A549 (cell line): ENCODE measurements at regions of chr5 and their contacts with region 1.

Region 1: GRCh38 chr5:126624534-126624933 is 23.8 kb downstream of the PHAX start:
- DNase-seq: peak; percentile 69 to 80
- ATAC-seq: peak; percentile 83 to 95
- H3K4me3 ChIP-seq: no peak overlapping the region
- H3K27ac ChIP-seq: peak overlapping the region; percentile 62 to 75
- H3K4me1 ChIP-seq: peaks cover 24% of the 10 kb centered on the region
- CTCF ChIP-seq: no peak
- EP300 ChIP-seq: no peak
- POLR2A ChIP-seq: no peak
- RAD21 ChIP-seq: no peak

Region 2: DNA sequence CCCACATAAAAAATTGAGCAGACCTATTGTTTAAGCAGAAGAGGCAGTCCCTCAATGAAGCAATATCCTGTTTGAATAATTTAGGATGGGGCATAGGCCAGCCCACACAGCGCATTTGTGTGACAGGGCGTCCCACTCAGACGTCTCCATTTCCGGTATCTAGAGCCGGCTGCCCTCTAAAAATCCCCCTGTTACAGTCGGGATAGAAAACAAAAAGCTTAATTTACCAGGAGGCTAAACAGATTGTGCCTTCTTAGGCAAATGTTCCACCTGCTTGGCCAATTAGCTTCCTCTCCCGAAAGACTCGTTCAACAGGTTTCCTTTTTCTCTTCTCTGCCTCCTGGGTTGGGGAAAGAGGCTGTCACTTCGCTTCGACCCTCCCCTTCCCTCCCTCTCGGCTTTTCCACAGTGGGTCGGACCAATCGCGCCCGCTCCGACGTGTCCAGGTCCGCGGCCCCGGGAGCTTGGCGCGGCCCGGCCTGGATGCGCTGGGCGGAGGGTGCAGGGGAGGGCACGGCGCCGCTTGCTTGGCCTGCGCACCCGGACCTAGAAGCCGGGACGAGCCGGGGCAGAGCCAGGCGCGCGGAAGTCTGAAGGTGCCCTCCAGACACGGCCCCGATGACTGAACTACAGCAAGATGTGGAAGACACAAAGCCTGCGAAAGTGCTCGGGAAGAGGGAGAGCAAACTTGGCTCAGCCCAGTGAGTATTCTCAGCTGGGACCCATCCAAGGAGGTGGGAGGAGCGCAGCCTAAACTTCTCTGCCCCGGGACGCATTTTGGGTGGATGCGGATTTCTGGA is 201.3 kb before region 1 on chr5 and contains the start of gene GRAMD2B:
- CTCF ChIA-PET with region 1: no interaction called
- POLR2A ChIA-PET with region 1: no interaction called
- DNase-seq: peak; percentile 60 to 64
- ATAC-seq: peak; percentile 95 to 98
- H3K4me3 ChIP-seq: peak within 1 kb of the TSS; percentile 57
- H3K27ac ChIP-seq: peak within 1 kb of the TSS; percentile 42 to 63; a peak in 5 of 6 replicates
- H3K4me1 ChIP-seq: no peaks in the 10 kb centered on the region
- CTCF ChIP-seq: no peak
- EP300 ChIP-seq: no peak
- POLR2A ChIP-seq: peak; percentile 54
- RAD21 ChIP-seq: no peak
- polyA plus RNA-seq, gene GRAMD2B: 1.2 and 1.3 TPM in 2 replicates

Region 3: GRCh38 chr5:126449751-126450271 is 174.7 kb before region 1 on chr5:
- CTCF ChIA-PET with region 1: no interaction called
- POLR2A ChIA-PET with region 1: no interaction called
- DNase-seq: no peak
- ATAC-seq: 0 out of 6 replicates have a peak, but pooled peaks of 1 of the 2 experiments have one; percentile 49
- H3K4me3 ChIP-seq: no peak overlapping the region
- H3K27ac ChIP-seq: no peak overlapping the region
- H3K4me1 ChIP-seq: no peaks in the 10 kb centered on the region
- CTCF ChIP-seq: no peak
- EP300 ChIP-seq: no peak
- POLR2A ChIP-seq: no peak
- RAD21 ChIP-seq: no peak

Region 4: DNA sequence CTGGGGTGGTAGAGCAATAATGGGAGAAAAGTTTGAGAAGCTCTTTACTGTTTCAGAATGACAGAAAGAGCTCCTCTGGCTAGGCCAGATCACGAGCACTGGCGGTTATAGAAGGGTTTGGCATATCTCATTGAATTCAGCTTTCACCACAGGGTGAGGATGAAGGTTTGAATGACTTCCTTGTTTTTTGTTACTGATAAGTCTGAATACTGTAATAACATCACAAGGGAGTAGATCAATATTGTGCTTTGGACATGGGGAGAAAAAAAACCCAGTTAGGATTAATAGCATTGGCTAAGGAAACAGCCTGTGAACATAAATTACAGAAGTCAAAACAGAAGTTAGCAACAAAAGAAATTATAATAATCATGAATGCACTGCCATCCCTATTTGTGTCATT is 14.4 kb before region 1 on chr5:
- CTCF ChIA-PET with region 1: no interaction called
- POLR2A ChIA-PET with region 1: interaction called, 11 read pairs
- DNase-seq: no peak
- ATAC-seq: no peak
- H3K4me3 ChIP-seq: no peak overlapping the region
- H3K27ac ChIP-seq: no peak overlapping the region
- H3K4me1 ChIP-seq: no peaks in the 10 kb centered on the region
- CTCF ChIP-seq: no peak
- EP300 ChIP-seq: no peak
- POLR2A ChIP-seq: no peak
- RAD21 ChIP-seq: no peak

Region 5: DNA sequence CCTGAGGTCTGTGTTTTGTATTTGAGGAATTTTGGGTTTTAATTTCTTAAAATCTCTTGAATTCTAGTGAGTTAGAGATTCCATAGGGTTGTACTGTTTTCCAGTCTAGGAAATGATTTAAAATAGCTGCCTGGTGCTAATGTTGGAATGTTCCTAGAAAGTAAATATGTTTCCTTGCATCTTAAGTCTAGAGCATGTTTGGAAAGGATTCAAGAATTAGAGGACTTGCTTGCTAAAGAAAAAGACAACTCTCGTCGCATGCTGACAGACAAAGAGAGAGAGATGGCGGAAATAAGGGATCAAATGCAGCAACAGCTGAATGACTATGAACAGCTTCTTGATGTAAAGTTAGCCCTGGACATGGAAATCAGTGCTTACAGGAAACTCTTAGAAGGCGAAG is 194.2 kb after region 1 on chr5:
- CTCF ChIA-PET with region 1: no interaction called
- POLR2A ChIA-PET with region 1: no interaction called
- DNase-seq: no peak
- ATAC-seq: no peak
- H3K4me3 ChIP-seq: no peak overlapping the region
- H3K27ac ChIP-seq: no peak overlapping the region
- H3K4me1 ChIP-seq: peaks cover 13% of the 10 kb centered on the region
- CTCF ChIP-seq: no peak
- EP300 ChIP-seq: no peak
- POLR2A ChIP-seq: no peak
- RAD21 ChIP-seq: no peak